ENCODE measurements at regions of chr11 and their contacts with region 1.

Region 1: GRCh38 chr11:65274735-65275682 is 13.2 kb downstream of the POLA2 start:
- DNase-seq: peak; percentile 53
- H3K4me3 Mint-ChIP-seq: no peak overlapping the region
- H3K27ac Mint-ChIP-seq: no peak overlapping the region
- H3K4me1 Mint-ChIP-seq: peaks cover 15% of the 10 kb centered on the region
- H3K27me3 Mint-ChIP-seq: no peaks in the 10 kb centered on the region

Region 2: GRCh38 chr11:64864473-64865285 is 410.3 kb before region 1 on chr11:
- CTCF ChIA-PET with region 1: no interaction called
- intact Hi-C with region 1: no loop called
- DNase-seq: peak; percentile 84
- H3K4me3 Mint-ChIP-seq: peak overlapping the region; percentile 56
- H3K27ac Mint-ChIP-seq: peak overlapping the region; percentile 97
- H3K4me1 Mint-ChIP-seq: peaks cover 95% of the 10 kb centered on the region
- H3K27me3 Mint-ChIP-seq: no peaks in the 10 kb centered on the region

Region 3: GRCh38 chr11:65040847-65041621 is 234.0 kb before region 1 on chr11 and contains the start of gene SAC3D1:
- CTCF ChIA-PET with region 1: no interaction called
- intact Hi-C with region 1: no loop called
- DNase-seq: peak; percentile 94
- H3K4me3 Mint-ChIP-seq: peak within 1 kb of the TSS; percentile 92
- H3K27ac Mint-ChIP-seq: peak within 1 kb of the TSS; percentile 98
- H3K4me1 Mint-ChIP-seq: peaks cover 19% of the 10 kb centered on the region
- H3K27me3 Mint-ChIP-seq: no peaks in the 10 kb centered on the region
- total RNA-seq, gene SAC3D1: 19.2 to 20.3 TPM

Region 4: GRCh38 chr11:65314501-65315203 is 39.6 kb after region 1 on chr11 and contains the start of gene CDC42EP2:
- CTCF ChIA-PET with region 1: interaction called, 34 read pairs
- intact Hi-C with region 1: loop called (anchors 1 kb)
- DNase-seq: peak; percentile 72
- H3K4me3 Mint-ChIP-seq: peak within 1 kb of the TSS; percentile 74
- H3K27ac Mint-ChIP-seq: no peak within 1 kb of the TSS
- H3K4me1 Mint-ChIP-seq: peaks cover 5% of the 10 kb centered on the region
- H3K27me3 Mint-ChIP-seq: peaks cover 8% of the 10 kb centered on the region
- total RNA-seq, gene CDC42EP2: 0.57 to 1.5 TPM

Region 5: GRCh38 chr11:65512306-65512705 is 237.3 kb after region 1 on chr11:
- CTCF ChIA-PET with region 1: no interaction called
- intact Hi-C with region 1: loop called (anchors 5 kb)
- DNase-seq: no peak
- H3K4me3 Mint-ChIP-seq: no peak overlapping the region
- H3K27ac Mint-ChIP-seq: no peak overlapping the region
- H3K4me1 Mint-ChIP-seq: peaks cover 16% of the 10 kb centered on the region
- H3K27me3 Mint-ChIP-seq: no peaks in the 10 kb centered on the region

Measured in activated naive CD4-positive, alpha-beta T cell treated with anti-CD3 and anti-CD28 coated beads for 36 hours (primary cell).